Astrocyte of the cerebellum (primary cell): ENCODE measurements at regions of chr10 and their contacts with region 1.

Region 1: GRCh38 chr10:88680958-88681357 is 16.7 kb downstream of the LIPF start:
- DNase-seq: no peak
- H3K4me3 ChIP-seq: no peak overlapping the region
- CTCF ChIP-seq: no peak

Region 2: GRCh38 chr10:88642978-88643377 is 38.0 kb before region 1 on chr10:
- in situ Hi-C with region 1: loop called (anchors 5 kb)
- DNase-seq: no peak
- H3K4me3 ChIP-seq: no peak overlapping the region
- CTCF ChIP-seq: no peak